ENCODE measurements at regions of chr11 and their contacts with region 1.

Region 1: GRCh38 chr11:57530596-57531507 is at the start of gene TIMM10:
- DNase-seq: peak; percentile 77
- ATAC-seq: peak; percentile 96
- H3K4me3 Mint-ChIP-seq: peak within 1 kb of the TSS; percentile 94
- H3K27ac Mint-ChIP-seq: peak within 1 kb of the TSS; percentile 90
- H3K4me1 Mint-ChIP-seq: peaks cover 25% of the 10 kb centered on the region
- H3K27me3 Mint-ChIP-seq: no peaks in the 10 kb centered on the region
- CTCF ChIP-seq: no peak
- total RNA-seq, gene TIMM10: 100 and 108 TPM in 2 replicates

Region 2: DNA sequence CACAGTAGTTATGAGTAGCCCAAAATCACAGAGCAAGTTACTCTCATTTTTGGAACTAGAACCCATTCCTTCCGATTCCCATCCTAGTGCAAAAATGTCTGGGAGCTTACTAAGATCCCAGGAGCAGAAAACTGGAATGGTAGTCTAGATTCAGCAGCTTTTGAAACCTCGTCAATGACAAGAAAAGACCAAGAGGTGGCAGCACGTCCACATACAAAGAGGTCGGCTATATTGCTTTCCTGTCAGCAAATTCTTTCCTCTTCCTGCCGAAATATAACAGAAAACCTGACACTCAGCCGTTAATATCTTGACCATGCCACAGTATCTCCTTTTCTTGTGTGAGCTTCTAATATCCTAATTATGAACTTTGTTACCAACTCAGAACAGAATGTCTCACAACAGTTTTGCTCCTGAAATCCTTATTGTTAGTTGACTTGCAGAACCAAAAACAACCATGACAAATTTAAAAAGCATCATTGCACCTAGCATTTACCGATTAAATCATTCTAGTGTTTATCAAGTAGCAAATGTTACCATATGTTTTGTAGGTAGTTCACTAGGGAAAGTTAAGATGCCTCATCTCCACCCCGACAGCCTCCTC is 689.5 kb before region 1 on chr11:
- CTCF ChIA-PET with region 1: no interaction called
- POLR2A ChIA-PET with region 1: no interaction called
- intact Hi-C with region 1: loop called (anchors 10 kb)
- DNase-seq: no peak
- ATAC-seq: no peak
- H3K4me3 Mint-ChIP-seq: no peak overlapping the region
- H3K27ac Mint-ChIP-seq: no peak overlapping the region
- H3K4me1 Mint-ChIP-seq: no peaks in the 10 kb centered on the region
- H3K27me3 Mint-ChIP-seq: no peaks in the 10 kb centered on the region
- CTCF ChIP-seq: no peak

Region 3: DNA sequence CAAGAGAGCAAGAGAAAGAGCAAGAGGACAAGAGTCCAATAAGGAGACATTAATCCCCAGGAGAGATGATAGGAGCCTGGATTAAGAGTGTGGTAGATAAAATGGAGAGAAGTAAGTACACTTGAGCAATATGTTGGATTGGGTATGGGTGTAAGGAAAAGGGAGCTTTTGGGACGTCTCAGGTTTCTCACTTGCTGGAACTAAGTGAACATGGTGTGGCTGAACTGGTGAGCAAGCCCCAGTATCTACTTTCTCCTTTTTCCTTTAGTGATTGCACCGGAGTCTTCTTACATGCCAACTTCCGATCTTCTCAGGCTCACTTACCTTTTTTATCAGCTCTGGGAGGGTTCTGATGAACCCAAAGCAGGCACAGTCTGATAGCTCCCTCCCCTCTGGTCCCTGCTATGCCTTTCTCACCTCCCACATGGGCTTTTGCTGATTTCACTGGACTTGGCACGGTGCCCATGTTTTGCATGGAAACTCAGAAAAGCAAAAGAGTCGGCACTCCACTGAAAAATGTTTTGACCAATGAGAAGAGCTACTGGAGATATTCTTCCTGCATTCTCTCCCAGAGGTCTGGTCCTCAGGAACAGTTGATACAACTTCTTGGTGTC is 279.3 kb before region 1 on chr11:
- CTCF ChIA-PET with region 1: no interaction called
- POLR2A ChIA-PET with region 1: no interaction called
- intact Hi-C with region 1: no loop called
- DNase-seq: no peak
- ATAC-seq: no peak
- H3K4me3 Mint-ChIP-seq: no peak overlapping the region
- H3K27ac Mint-ChIP-seq: no peak overlapping the region
- H3K4me1 Mint-ChIP-seq: no peaks in the 10 kb centered on the region
- H3K27me3 Mint-ChIP-seq: peaks cover 32% of the 10 kb centered on the region
- CTCF ChIP-seq: no peak

Region 4: DNA sequence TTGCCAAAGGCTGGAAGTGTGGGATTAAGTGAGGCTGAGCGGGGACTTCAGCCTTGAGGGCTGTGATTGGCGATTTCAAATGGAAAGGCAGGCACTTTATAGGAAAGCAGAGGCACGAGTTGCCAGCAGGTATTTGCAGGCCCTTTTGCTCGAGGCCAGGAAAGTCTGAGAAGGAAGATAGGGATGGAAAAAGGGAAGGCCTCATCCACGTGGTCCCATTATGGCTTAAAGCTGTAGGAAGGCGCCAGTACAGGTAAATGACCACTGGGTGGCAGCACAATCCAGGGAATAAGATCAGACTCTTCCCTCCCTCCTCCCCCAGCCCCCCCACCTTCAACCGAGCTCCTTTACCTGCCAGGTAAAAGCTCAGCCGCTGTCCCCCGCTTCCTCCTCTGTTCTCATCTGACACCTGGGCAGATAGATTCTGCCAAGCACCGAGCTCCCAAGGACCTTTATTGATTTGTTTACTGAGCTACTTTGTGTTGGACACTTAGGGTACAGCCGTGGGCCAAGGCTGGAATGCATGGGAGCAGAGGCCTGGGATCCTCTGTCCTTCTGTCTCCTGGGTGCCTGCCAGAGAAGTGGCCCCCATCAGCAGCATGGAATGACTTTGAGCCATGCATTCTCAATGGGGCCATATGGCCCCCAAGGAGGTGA is 185.2 kb before region 1 on chr11:
- CTCF ChIA-PET with region 1: interaction called, 28 read pairs
- POLR2A ChIA-PET with region 1: no interaction called
- intact Hi-C with region 1: loop called (anchors 1 kb)
- DNase-seq: peak; percentile 40
- ATAC-seq: peak; percentile 91
- H3K4me3 Mint-ChIP-seq: no peak overlapping the region
- H3K27ac Mint-ChIP-seq: no peak overlapping the region
- H3K4me1 Mint-ChIP-seq: peaks cover 3% of the 10 kb centered on the region
- H3K27me3 Mint-ChIP-seq: peaks cover 3% of the 10 kb centered on the region
- CTCF ChIP-seq: no peak

Region 5: DNA sequence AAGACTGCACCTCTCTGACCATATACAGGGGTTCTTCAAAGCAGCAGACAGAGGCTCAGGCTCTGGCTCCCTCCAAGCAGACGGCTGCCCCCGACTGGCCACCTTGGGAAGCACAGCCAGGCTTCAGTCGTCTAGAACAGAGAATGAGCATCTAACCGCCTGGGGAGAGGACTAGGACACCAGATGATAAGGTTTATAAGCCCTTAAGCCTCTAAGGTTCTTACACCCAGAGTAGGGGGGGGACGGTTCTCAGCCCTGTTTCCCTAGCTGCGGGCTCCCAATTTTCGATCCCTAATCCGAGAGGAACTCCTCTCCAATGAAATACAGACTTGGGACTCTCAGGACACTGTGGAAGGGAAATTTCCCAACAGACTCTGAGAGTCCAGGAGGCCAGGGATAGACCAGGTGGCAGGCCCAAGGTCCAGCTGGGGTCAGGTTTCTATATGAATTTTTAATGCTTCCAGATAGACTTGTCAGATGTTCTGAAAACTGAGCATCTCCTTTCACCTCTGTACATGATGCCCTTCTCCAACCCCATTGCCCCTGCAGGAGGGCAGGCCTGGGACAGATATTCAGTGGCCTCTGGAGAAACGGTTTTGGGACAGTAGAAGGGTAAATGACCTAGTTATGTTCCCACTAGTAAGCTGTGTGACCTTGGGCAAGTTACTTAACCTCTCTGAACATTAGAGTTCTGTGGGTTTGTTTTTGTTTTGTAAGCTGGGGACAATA is 50.3 kb before region 1 on chr11:
- CTCF ChIA-PET with region 1: interaction called, 22 read pairs
- POLR2A ChIA-PET with region 1: interaction called, 3 read pairs
- intact Hi-C with region 1: loop called (anchors 2 kb)
- DNase-seq: peak; percentile 47
- ATAC-seq: peak; percentile 29
- H3K4me3 Mint-ChIP-seq: no peak overlapping the region
- H3K27ac Mint-ChIP-seq: no peak overlapping the region
- H3K4me1 Mint-ChIP-seq: peaks cover 59% of the 10 kb centered on the region
- H3K27me3 Mint-ChIP-seq: peaks cover 7% of the 10 kb centered on the region
- CTCF ChIP-seq: no peak

Region 6: DNA sequence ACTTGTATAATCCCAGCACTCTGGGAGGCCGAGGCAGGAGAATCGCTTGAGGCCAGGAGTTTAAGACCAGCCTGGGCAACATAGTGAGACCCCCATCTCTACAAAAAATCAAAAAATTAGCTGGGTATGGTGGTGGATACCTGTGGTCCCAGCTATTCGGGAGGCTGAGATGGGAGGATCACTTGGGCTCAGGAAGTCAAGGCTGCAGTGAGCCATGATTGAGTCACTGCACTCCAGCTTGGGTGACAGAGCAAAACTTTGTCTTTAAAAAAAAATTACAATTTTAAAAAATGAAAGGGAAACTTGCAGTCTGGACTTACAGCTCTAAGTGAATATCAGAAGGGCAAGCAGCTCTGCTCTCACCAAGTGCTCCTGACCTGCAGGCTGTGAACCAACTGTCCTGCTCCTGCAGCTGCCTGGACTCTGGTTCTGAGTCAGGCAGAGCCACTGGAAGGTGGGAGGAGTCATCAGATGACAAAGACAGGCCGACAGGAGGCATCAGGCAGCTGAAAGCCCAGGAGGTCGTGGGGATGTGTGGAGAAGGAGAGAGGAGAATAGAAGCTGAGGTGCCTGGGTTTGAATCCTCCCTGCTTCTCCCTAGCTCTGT is 16.1 kb after region 1 on chr11:
- CTCF ChIA-PET with region 1: interaction called, 3 read pairs
- POLR2A ChIA-PET with region 1: interaction called, 16 read pairs
- intact Hi-C with region 1: loop called (anchors 1 kb)
- DNase-seq: no peak
- ATAC-seq: no peak
- H3K4me3 Mint-ChIP-seq: no peak overlapping the region
- H3K27ac Mint-ChIP-seq: peak overlapping the region; percentile 80
- H3K4me1 Mint-ChIP-seq: peaks cover 20% of the 10 kb centered on the region
- H3K27me3 Mint-ChIP-seq: no peaks in the 10 kb centered on the region
- CTCF ChIP-seq: no peak

Region 7: GRCh38 chr11:57657194-57658022 is 126.6 kb after region 1 on chr11 and contains the start of gene CLP1:
- CTCF ChIA-PET with region 1: no interaction called
- POLR2A ChIA-PET with region 1: interaction called, 3 read pairs
- intact Hi-C with region 1: loop called (anchors 1 kb)
- DNase-seq: peak; percentile 96
- ATAC-seq: peak; percentile 97
- H3K4me3 Mint-ChIP-seq: peak within 1 kb of the TSS; percentile 99
- H3K27ac Mint-ChIP-seq: peak within 1 kb of the TSS; percentile 94
- H3K4me1 Mint-ChIP-seq: peaks cover 23% of the 10 kb centered on the region
- H3K27me3 Mint-ChIP-seq: no peaks in the 10 kb centered on the region
- CTCF ChIP-seq: no peak
- total RNA-seq, gene CLP1: 20.4 and 20.9 TPM in 2 replicates

Region 8: GRCh38 chr11:57741132-57742086 is 210.6 kb after region 1 on chr11 and contains the start of gene SELENOH:
- CTCF ChIA-PET with region 1: no interaction called
- POLR2A ChIA-PET with region 1: no interaction called
- intact Hi-C with region 1: loop called (anchors 1 kb)
- DNase-seq: peak; percentile 84
- ATAC-seq: peak; percentile 90
- H3K4me3 Mint-ChIP-seq: peak within 1 kb of the TSS; percentile 96
- H3K27ac Mint-ChIP-seq: peak within 1 kb of the TSS; percentile 98
- H3K4me1 Mint-ChIP-seq: peaks cover 30% of the 10 kb centered on the region
- H3K27me3 Mint-ChIP-seq: no peaks in the 10 kb centered on the region
- CTCF ChIP-seq: no peak
- total RNA-seq, gene SELENOH: 210 and 224 TPM in 2 replicates